ENCODE measurements at regions of chr9 and their contacts with region 1.

Region 1: DNA sequence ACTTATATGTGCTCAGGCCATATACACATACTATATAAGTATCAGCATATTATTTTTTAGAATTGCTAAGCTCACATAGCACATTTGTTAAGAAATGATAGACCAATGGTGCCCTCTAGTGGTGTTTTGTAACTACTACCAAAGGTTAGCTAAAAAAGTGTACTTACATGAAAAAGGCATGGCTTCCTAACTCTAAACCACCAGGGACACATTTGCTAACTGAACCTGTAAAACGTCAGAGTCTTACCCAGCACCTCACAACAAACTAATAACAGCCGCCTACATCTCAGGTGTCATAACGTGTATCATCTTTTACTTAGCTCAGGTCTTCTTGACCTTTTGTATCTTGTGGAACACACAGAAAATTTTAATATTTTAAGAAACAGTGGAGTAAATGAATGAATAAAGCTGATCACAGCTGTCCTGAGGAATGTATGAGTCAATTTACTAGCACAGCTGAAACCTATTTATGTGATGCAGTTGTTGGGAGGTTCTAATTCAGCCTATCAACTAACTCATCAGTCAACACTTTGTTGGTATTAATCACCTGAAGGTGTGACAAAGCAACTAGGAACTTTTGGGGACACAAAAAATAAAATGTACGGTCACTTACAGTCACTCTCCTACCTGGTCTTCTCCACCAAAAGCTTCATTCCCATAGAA is 72.9 kb downstream of the BAAT start:
- DNase-seq: peak; percentile 38 to 79
- H3K4me3 ChIP-seq: no peak overlapping the region
- H3K4me1 ChIP-seq: no peaks in the 10 kb centered on the region
- H3K27me3 ChIP-seq: peaks cover 2% of the 10 kb centered on the region; the same call in 1 of the 2 replicates

Region 2: DNA sequence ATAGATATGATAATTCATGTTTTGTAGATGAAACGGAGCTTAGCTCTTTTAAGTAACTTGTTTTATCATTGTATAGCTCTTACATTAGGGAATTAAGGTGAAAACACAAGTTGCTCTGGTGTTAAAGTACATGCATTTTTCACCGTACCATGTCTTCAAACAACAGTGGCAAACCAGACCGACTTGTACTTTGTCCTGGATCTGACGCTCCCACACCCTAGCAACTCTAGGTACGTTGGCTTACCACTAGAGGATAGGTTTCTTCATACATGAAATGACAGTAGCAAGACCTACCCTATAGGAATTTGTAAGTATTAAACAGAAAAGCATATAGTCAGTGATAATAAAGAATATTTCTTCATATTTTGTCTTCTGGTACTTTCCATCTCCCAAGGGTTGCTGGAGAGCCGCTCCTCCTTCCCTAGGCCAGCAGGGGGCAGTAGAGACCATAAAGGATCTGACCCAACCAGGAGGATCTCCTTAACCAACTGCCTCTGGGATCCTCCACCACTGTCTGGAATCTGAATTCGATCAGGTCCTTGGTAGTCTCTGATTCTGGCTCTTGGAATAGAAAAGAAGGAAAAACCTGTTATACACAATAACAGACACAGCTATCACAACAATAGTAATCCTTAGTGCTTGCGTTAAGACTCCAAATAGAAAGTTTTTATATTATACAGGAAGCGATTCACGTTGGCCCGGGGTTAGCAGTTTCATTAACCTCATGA is 597.4 kb before region 1 on chr9:
- in situ Hi-C with region 1: loop called (anchors 10 kb)
- DNase-seq: peak; percentile 40 to 88
- H3K4me3 ChIP-seq: no peak overlapping the region
- H3K4me1 ChIP-seq: no peaks in the 10 kb centered on the region
- H3K27me3 ChIP-seq: no peaks in the 10 kb centered on the region

Region 3: DNA sequence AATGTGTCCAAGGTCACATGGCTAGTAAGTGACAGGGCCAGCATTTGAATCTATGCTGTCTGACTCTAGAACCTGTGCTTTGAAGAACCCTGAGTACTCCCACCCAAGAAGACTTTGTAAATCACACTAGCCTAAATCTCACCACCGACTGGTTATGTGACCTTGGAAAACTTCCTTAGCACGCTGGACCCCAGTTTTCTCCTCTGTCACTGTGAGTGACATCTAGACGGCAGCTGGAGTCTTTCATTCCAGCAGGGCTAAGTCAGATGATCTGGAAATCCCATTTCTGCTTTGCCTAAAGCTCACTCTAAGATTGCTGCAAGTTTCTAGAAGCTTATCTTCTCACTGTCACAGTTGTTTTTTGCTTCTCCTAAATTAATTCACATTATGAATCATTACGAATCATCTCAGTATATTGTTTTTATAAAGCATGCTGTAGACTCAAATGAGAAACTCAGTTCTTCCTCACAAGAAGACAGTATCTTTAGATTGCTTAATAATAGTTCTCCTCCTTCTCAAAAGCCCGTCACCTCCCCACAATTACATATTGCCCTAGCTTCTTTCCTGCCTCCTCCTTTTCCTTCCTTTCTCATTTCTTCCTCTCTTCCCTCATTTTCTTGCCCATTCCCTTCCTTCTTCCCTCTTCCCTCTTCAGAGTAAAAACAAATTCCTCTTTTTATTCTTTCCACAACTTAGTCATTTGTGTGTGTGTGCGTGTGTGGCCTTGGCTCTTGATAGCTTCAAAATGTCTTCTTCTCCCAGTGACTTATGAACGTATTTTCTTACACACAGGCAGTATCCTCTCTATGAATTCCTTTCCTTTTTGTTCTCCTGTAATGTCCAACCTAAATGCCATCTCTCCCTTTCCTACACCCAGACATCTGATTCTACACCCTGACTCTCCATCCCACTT is 106.9 kb after region 1 on chr9:
- in situ Hi-C with region 1: no loop called
- DNase-seq: no peak
- H3K4me3 ChIP-seq: no peak overlapping the region
- H3K4me1 ChIP-seq: no peaks in the 10 kb centered on the region
- H3K27me3 ChIP-seq: no peaks in the 10 kb centered on the region; the same call in none of the 2 replicates

Region 4: DNA sequence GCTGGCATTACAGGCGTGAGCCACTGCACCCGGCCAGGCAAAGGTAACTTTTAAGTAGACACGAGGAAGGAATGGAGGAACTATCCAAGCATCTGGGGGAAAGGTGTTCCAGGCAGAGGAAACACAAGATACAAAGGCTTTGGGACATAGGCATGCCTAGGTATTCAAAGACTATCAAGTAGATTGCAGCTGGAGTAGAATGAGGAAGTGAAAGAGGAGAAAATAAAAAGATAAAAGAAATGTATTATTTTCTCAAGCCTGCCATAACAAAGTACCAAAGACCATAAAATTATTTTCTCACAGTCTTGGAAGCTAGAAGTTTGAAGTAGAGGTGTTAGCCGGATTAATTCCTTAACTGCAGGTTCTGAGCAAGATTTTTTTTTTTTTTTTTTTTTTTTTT is 466.4 kb after region 1 on chr9:
- in situ Hi-C with region 1: no loop called
- DNase-seq: no peak
- H3K4me3 ChIP-seq: no peak overlapping the region
- H3K4me1 ChIP-seq: peaks cover 5% of the 10 kb centered on the region; the same call in 1 of the 2 replicates
- H3K27me3 ChIP-seq: no peaks in the 10 kb centered on the region

Measured in HAP-1 (cell line).